ENCODE measurements at regions of chr1 and their contacts with region 1.

Region 1: DNA sequence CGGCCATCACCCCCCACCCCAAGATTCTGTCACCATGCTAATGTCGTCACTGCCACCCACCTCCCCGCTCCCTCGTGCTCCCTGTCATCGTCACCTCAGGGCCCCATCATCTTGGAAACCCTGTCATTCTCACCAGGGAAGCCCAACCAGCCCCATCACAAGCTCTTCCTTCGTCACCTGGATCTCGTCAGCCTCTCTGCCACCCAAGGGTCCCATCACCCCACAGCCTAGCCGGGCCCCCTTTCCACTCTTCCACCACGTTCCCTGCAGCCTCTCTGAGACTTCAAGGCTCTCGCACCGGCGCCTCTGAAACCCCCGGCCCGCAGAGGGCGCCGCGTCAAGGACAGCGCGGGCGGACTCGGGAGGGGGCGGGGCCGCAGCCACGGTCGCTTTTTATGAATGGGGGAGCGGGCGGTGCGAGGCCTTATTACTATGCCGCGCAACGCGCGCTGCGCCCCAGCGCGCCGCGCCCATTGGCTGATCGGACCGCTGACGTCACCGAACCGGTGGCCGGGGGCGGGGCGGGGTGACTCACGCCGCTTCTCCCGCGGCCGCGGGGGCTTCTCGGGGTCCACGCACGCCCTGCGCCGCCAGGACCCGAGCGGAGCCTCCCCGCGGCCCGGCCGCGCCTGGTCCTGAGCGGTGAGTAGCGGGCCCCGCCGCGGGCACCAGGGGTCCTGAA is at the start of gene GPR3:
- DNase-seq: peak; percentile 97
- ATAC-seq: peak; percentile 91
- H3K4me3 Mint-ChIP-seq: peak within 1 kb of the TSS; percentile 70
- H3K27ac Mint-ChIP-seq: peak within 1 kb of the TSS; percentile 92
- H3K4me1 Mint-ChIP-seq: peaks cover 14% of the 10 kb centered on the region
- H3K27me3 Mint-ChIP-seq: no peaks in the 10 kb centered on the region
- total RNA-seq, gene GPR3: 1.1 to 1.3 TPM

Region 2: DNA sequence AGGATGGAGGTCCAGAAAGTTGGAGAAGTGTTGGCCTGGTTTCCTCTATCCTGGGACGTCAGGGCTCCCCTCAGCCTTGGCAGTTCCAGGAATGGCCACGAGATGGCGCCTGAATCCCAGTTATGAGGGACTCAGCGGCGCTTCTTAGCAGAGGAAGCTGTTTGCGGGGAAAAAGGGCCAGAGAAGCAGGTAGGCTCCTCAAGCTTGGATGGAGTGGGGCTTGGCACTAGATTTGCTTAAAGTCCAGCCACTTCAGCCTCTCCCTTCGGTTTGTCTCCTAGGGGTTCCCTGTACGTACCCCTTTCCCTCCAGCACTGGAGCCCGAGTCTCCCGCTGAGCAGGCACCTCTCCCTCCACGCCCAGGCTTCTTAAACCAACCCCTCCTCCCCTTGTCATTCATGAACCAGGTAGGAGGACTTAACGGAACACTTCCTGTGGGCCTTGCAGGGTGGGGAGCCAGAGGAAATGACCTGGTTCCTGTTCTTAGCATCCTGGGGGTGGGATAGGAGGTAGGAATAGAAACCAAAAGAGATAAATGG is 347.6 kb before region 1 on chr1:
- CTCF ChIA-PET with region 1: interaction called, 3 read pairs
- POLR2A ChIA-PET with region 1: no interaction called
- intact Hi-C with region 1: loop called in 1 of 2 experiments (anchors 2 kb)
- DNase-seq: peak; percentile 94
- ATAC-seq: peak; percentile 89
- H3K4me3 Mint-ChIP-seq: peak overlapping the region; percentile 65
- H3K27ac Mint-ChIP-seq: peak overlapping the region; percentile 60
- H3K4me1 Mint-ChIP-seq: peaks cover 20% of the 10 kb centered on the region
- H3K27me3 Mint-ChIP-seq: no peaks in the 10 kb centered on the region

Region 3: DNA sequence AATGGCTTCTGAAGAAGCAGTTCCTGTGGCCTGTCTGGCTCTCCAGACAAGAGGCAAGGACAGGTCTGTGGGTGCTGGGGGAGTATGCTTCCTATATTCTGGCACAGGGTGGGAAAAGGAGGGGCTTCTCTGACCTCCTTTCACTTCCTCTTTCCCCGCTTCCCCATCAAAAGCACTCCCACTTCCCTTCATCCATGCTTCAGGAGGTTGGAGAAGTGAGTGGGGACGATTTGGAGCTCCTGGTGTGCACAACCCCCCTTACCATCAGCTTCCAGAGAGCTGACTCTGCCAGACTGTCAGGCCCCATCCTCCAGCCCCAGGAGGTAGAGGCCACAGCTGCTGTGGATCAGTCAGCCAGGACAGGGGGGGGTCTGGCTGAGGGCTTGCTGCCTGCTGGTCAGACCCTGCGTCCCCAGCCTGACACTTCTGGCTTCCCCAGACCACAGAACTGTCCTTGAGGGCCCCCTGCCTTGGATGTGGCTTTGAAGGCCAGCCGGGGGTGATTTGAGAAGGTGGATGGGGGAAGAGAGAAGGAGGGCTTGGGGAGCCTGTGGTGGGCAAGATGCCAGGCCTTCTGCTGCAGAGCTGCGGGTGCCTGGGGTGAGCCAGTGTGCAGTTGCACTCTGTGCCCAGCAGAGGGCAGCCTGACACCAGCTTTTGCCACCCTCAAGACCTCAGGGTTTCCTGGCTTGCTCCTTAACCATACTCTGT is 91.7 kb before region 1 on chr1:
- CTCF ChIA-PET with region 1: interaction called, 192 read pairs
- POLR2A ChIA-PET with region 1: interaction called, 4 read pairs
- intact Hi-C with region 1: loop called (anchors 1 kb)
- DNase-seq: peak; percentile 86
- ATAC-seq: peak; percentile 92
- H3K4me3 Mint-ChIP-seq: no peak overlapping the region
- H3K27ac Mint-ChIP-seq: no peak overlapping the region
- H3K4me1 Mint-ChIP-seq: no peaks in the 10 kb centered on the region
- H3K27me3 Mint-ChIP-seq: no peaks in the 10 kb centered on the region

Region 4: DNA sequence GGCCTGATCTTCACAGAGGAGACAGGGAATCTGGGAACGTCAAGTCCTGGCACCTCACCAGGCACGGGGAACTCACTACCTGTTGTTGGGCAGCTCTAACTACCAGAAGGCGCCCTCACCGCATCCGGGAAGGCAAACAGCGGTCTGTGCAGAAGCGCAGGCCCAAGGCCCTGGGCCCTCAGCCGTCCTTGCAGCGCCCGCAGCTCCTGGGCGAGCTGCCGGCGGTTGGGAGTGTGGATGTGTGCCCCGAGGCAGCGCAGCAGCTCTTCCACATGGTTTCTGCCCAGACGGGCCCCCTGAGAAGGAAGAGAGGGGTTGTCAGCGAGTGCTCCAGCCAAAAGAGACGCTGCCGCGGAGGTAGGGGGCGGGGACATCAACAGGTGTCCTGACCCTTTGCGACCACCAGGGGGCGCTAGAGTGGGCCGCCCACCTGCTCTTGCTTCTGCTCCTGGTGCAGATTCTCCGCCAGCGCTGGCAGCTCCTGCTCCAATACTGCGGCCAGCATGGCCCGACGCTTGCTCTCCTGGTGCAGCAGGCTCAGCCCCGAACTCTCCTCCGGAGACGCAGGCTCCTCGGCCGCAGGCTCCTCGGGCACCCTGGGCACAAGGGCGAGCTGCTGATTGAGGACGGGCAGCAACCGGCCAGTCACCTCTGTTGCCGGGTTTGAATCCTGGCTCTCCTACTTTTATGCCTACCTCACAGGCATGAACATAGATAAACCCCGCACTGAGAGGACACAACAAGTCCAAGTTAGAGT is 34.8 kb before region 1 on chr1:
- CTCF ChIA-PET with region 1: interaction called, 17 read pairs
- POLR2A ChIA-PET with region 1: no interaction called
- intact Hi-C with region 1: loop called (anchors 1 kb)
- DNase-seq: peak; percentile 91
- ATAC-seq: peak; percentile 78
- H3K4me3 Mint-ChIP-seq: peak overlapping the region; percentile 64
- H3K27ac Mint-ChIP-seq: peak overlapping the region; percentile 73
- H3K4me1 Mint-ChIP-seq: peaks cover 40% of the 10 kb centered on the region
- H3K27me3 Mint-ChIP-seq: no peaks in the 10 kb centered on the region

Region 5: DNA sequence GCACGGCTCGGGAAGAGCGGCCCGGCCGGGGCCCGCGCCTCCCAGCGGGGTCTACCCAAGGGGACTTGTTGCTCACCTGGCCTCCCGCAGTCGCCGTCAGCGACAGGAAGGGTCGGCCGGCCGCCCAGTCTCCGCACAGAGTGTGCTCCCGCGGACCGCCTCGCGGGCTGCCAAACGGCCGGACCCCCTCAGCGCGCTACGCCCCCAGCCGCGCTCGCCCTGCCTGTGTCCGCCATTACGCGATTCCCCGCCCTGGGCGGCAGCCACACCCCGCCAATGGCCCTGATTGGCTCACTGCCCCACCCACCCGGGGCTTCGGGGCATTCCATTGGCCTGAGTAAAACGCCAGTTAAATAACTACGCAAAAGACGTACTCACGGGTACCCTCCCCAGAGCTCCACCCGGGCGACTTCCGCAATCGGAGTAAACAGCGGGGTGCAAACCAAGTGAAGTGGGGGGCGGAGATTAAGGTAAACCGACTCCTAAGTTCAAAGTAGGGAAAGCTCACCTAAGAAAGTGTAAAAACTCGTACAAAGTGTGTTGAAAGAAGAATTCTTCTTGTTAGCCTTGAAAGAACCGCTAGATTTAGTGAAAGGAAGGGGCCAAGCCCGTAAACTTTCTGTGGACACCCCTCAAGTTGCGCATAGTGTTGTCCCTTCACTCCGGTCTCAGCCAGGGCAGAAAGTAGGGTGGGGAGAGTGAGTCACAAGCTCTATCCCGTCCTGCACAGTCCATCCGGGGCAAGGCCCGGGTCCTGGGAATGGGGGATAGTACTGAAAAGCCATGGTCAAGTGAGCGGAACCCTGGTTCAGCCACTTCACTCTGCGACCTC is 97.9 kb after region 1 on chr1 and contains the start of gene WASF2:
- CTCF ChIA-PET with region 1: interaction called, 4 read pairs
- POLR2A ChIA-PET with region 1: no interaction called
- intact Hi-C with region 1: loop called in 1 of 2 experiments (anchors 1 kb)
- DNase-seq: peak; percentile 98
- ATAC-seq: peak; percentile 96
- H3K4me3 Mint-ChIP-seq: peak within 1 kb of the TSS; percentile 98
- H3K27ac Mint-ChIP-seq: peak within 1 kb of the TSS; percentile 99
- H3K4me1 Mint-ChIP-seq: peaks cover 28% of the 10 kb centered on the region
- H3K27me3 Mint-ChIP-seq: no peaks in the 10 kb centered on the region
- total RNA-seq, gene WASF2: 104 to 132 TPM

Region 6: GRCh38 chr1:27662707-27663393 is 270.6 kb after region 1 on chr1:
- CTCF ChIA-PET with region 1: interaction called, 4 read pairs
- POLR2A ChIA-PET with region 1: no interaction called
- intact Hi-C with region 1: loop called (anchors 1 to 2 kb)
- DNase-seq: peak; percentile 94
- ATAC-seq: peak; percentile 84
- H3K4me3 Mint-ChIP-seq: peak overlapping the region; percentile 70
- H3K27ac Mint-ChIP-seq: peak overlapping the region; percentile 98
- H3K4me1 Mint-ChIP-seq: peaks cover 45% of the 10 kb centered on the region
- H3K27me3 Mint-ChIP-seq: no peaks in the 10 kb centered on the region

Region 7: GRCh38 chr1:28199328-28200233 is 807.3 kb after region 1 on chr1:
- CTCF ChIA-PET with region 1: no interaction called
- POLR2A ChIA-PET with region 1: no interaction called
- intact Hi-C with region 1: no loop called
- DNase-seq: peak; percentile 84
- ATAC-seq: peak; percentile 92
- H3K4me3 Mint-ChIP-seq: peak overlapping the region; percentile 37
- H3K27ac Mint-ChIP-seq: peak overlapping the region; percentile 89
- H3K4me1 Mint-ChIP-seq: peaks cover 47% of the 10 kb centered on the region
- H3K27me3 Mint-ChIP-seq: no peaks in the 10 kb centered on the region